ENCODE measurements at regions of chr16 and their contacts with region 1.

Region 1: DNA sequence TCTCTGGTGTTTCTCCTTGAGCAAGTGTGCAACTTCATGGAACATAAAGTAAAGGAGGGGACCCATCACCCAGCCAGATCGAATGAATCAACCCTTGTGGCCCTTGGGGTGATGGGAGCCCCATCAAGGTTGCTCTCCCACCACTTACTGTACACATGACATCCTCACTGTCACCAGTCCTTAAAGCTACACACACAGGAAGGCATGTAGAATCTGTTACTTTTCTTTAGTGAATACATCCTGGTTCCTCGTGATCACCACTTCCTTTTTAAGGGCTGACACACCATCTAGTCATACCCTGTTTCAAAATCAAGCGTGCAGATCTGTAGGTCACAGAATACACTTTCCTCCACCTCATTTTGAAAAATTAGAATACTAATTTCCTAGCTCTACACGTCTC is 22.6 kb upstream of the MPHOSPH6 start:
- DNase-seq: no peak
- H3K4me3 ChIP-seq: no peak overlapping the region
- H3K27ac ChIP-seq: no peak overlapping the region
- H3K4me1 ChIP-seq: no peaks in the 10 kb centered on the region
- H3K27me3 ChIP-seq: no peaks in the 10 kb centered on the region
- CTCF ChIP-seq: no peak

Region 2: GRCh38 chr16:82876951-82877350 is 684.3 kb after region 1 on chr16:
- CTCF ChIA-PET with region 1: no interaction called
- POLR2A ChIA-PET with region 1: interaction called, 20 read pairs
- intact Hi-C with region 1: no loop called
- DNase-seq: no peak
- H3K4me3 ChIP-seq: no peak overlapping the region
- H3K27ac ChIP-seq: no peak overlapping the region
- H3K4me1 ChIP-seq: no peaks in the 10 kb centered on the region
- H3K27me3 ChIP-seq: no peaks in the 10 kb centered on the region
- CTCF ChIP-seq: no peak